AG04449 (cell line): ENCODE measurements at regions of chr5 and their contacts with region 1.

Region 1: DNA sequence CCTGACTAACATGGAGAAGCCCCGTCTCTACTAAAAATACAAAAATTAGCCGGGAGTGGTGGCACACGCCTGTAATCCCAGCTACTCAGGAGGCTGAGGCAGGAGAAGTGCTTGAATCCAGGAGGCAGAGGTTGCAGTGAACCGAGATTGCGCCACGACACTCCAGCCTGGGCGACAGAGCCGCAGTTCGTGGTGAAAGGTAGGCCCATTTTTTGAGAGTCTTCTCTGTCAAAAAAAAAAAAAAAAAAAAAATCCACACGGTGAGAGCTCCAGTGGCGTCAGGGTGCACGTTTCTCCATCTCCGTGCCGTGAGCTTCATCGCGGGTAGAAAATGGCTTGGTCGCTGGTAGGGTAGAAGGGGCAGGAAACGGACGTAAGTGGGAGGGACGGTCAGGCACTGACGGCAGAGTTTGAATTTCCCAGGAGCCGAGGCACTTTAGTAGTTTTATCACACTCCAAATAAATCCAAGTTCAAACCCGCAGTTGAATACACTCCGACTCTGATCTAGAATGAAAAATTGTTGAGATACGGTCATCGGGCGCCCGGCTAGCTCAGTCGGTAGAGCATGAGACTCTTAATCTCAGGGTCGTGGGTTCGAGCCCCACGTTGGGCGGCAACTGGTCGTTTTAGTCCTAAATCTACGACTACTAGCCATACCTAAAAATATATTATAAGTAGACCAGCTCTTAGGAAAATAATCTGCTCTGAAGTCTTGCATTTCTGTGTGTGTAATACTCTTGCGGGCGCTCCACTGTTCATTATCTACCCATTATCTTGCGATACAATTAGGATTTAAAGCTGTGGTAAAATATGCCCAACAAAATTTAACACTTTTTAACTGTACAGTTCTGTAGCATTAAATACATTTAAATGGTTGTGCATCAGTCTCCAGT is 2.5 kb upstream of the TRIM7 start:
- DNase-seq: peak; percentile 71
- H3K4me3 ChIP-seq: peak overlapping the region; percentile 57
- CTCF ChIP-seq: no peak

Region 2: GRCh38 chr5:181191529-181192394 is 15.7 kb before region 1 on chr5:
- CTCF ChIA-PET with region 1: interaction called, 29 read pairs
- POLR2A ChIA-PET with region 1: interaction called, 26 read pairs
- DNase-seq: no peak
- H3K4me3 ChIP-seq: peak overlapping the region; percentile 90
- CTCF ChIP-seq: no peak

Region 3: GRCh38 chr5:181260387-181261319 is 53.2 kb after region 1 on chr5 and contains the start of gene TRIM52:
- CTCF ChIA-PET with region 1: no interaction called
- POLR2A ChIA-PET with region 1: interaction called, 15 read pairs
- DNase-seq: peak; percentile 44
- H3K4me3 ChIP-seq: peak within 1 kb of the TSS; percentile 97
- CTCF ChIP-seq: no peak